Activated B cell treated with CpG ODN at 0.5 μM for 24 hours (primary cell): ENCODE measurements at regions of chr4 and their contacts with region 1.

Region 1: GRCh38 chr4:150867148-150867547 is 147.9 kb downstream of the LRBA start:
- DNase-seq: no peak
- ATAC-seq: peak; percentile 66
- H3K4me3 Mint-ChIP-seq: no peak overlapping the region
- H3K27ac Mint-ChIP-seq: no peak overlapping the region
- H3K4me1 Mint-ChIP-seq: no peaks in the 10 kb centered on the region
- H3K27me3 Mint-ChIP-seq: no peaks in the 10 kb centered on the region
- CTCF ChIP-seq: peak; percentile 59

Region 2: DNA sequence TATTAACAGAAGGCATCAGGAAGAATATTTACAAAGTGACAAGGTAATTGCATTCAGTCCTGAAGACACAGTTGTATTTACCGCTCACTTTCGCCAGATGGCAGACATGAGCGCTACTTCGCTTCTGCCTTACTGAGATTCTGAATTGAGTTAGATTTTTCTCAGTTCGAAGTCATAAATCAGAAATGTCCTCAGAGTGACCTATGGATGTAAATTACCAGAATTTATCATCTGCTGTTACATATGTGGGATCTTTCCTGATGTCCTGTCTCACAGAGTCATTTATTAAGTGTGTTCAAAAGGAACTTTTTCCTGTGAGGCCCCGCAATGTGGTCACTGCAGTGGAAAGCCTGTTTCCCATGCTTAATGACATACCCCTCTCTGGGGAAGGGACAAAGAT is 886.2 kb before region 1 on chr4:
- CTCF ChIA-PET with region 1: interaction called, 6 read pairs
- POLR2A ChIA-PET with region 1: no interaction called
- intact Hi-C with region 1: loop called (anchors 1 kb)
- DNase-seq: no peak
- ATAC-seq: peak; percentile 60
- H3K4me3 Mint-ChIP-seq: no peak overlapping the region
- H3K27ac Mint-ChIP-seq: no peak overlapping the region
- H3K4me1 Mint-ChIP-seq: no peaks in the 10 kb centered on the region
- H3K27me3 Mint-ChIP-seq: no peaks in the 10 kb centered on the region
- CTCF ChIP-seq: peak; percentile 80

Region 3: DNA sequence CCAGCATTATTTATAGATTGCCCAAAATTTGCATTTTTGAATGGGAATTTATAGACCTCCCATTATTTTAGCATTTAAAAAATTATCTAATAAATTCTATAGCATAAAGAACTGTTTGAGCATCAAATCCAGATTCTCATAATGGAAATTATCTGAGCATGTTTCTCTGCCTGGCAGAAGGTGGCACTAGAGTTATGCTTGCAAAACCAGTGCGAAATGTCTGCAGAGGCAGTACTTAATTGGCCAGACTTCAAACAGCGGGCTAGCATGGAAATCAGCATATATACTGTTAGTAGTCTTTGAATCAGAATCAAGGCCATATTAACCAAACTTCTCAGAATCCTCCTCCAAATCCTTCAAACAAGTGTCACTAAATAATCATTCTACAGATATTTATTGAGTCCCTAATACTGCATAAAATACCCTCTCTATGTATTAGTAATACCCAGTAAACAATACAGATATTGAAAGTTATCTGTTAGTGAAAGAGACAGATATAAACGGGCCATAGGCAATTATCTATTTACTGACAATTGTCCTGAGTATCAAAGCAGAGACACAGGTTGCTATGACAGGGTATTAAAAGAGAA is 867.6 kb before region 1 on chr4:
- CTCF ChIA-PET with region 1: interaction called, 3 read pairs
- POLR2A ChIA-PET with region 1: no interaction called
- intact Hi-C with region 1: loop called (anchors 1 kb)
- DNase-seq: no peak
- ATAC-seq: peak; percentile 54
- H3K4me3 Mint-ChIP-seq: no peak overlapping the region
- H3K27ac Mint-ChIP-seq: no peak overlapping the region
- H3K4me1 Mint-ChIP-seq: no peaks in the 10 kb centered on the region
- H3K27me3 Mint-ChIP-seq: no peaks in the 10 kb centered on the region
- CTCF ChIP-seq: no peak

Region 4: GRCh38 chr4:150242820-150243458 is 624.2 kb before region 1 on chr4:
- CTCF ChIA-PET with region 1: interaction called, 3 read pairs
- POLR2A ChIA-PET with region 1: no interaction called
- intact Hi-C with region 1: loop called (anchors 2 kb)
- DNase-seq: no peak
- ATAC-seq: no peak
- H3K4me3 Mint-ChIP-seq: no peak overlapping the region
- H3K27ac Mint-ChIP-seq: no peak overlapping the region
- H3K4me1 Mint-ChIP-seq: no peaks in the 10 kb centered on the region
- H3K27me3 Mint-ChIP-seq: peaks cover 3% of the 10 kb centered on the region
- CTCF ChIP-seq: peak; percentile 48

Region 5: GRCh38 chr4:150297861-150298474 is 569.2 kb before region 1 on chr4:
- CTCF ChIA-PET with region 1: interaction called, 44 read pairs
- POLR2A ChIA-PET with region 1: no interaction called
- intact Hi-C with region 1: loop called (anchors 1 kb)
- DNase-seq: no peak
- ATAC-seq: no peak
- H3K4me3 Mint-ChIP-seq: no peak overlapping the region
- H3K27ac Mint-ChIP-seq: no peak overlapping the region
- H3K4me1 Mint-ChIP-seq: no peaks in the 10 kb centered on the region
- H3K27me3 Mint-ChIP-seq: no peaks in the 10 kb centered on the region
- CTCF ChIP-seq: no peak

Region 6: GRCh38 chr4:150415213-150415612 is 451.9 kb before region 1 on chr4:
- CTCF ChIA-PET with region 1: no interaction called
- POLR2A ChIA-PET with region 1: no interaction called
- intact Hi-C with region 1: no loop called
- DNase-seq: no peak
- ATAC-seq: no peak
- H3K4me3 Mint-ChIP-seq: no peak overlapping the region
- H3K27ac Mint-ChIP-seq: no peak overlapping the region
- H3K4me1 Mint-ChIP-seq: no peaks in the 10 kb centered on the region
- H3K27me3 Mint-ChIP-seq: no peaks in the 10 kb centered on the region
- CTCF ChIP-seq: no peak

Region 7: DNA sequence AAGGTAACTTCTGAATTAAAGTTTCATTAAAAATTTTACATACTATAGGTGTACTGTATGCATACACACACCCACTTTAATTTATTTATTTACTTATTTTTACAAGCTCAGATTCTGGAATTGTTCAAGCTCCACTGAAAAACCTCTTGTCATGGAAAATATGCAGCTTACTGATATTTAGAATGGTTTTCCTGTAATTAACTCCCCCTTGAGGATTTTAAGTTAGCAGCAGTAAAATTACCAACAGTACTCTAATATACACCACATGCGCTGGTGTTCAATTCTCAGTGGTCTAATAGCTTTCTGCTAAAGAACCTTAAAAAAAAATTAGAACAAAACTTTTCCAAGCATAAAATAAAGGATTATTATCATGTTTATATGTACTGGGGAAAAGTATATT is 273.2 kb before region 1 on chr4:
- CTCF ChIA-PET with region 1: no interaction called
- POLR2A ChIA-PET with region 1: no interaction called
- intact Hi-C with region 1: loop called (anchors 10 kb)
- DNase-seq: no peak
- ATAC-seq: no peak
- H3K4me3 Mint-ChIP-seq: no peak overlapping the region
- H3K27ac Mint-ChIP-seq: no peak overlapping the region
- H3K4me1 Mint-ChIP-seq: no peaks in the 10 kb centered on the region
- H3K27me3 Mint-ChIP-seq: no peaks in the 10 kb centered on the region
- CTCF ChIP-seq: no peak

Region 8: DNA sequence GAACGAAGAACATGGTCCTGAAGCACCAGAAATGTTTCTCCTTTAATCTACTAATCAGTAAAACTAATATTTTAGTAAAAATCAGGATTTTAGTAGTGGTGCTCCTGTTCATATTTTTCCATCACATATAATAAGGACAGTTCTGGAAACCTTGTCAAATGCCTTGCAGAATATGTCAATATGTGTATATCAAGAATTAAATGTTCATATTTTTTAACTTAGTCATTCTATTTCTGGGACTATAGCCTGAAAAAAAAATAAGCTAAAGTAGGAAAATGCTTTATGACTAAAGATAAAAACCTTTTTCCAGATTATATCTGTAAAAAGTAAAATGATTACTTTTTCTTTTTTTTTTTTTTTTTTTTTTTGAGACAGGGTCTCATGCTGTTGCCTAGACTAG is 220.1 kb before region 1 on chr4:
- CTCF ChIA-PET with region 1: no interaction called
- POLR2A ChIA-PET with region 1: no interaction called
- intact Hi-C with region 1: no loop called
- DNase-seq: no peak
- ATAC-seq: no peak
- H3K4me3 Mint-ChIP-seq: no peak overlapping the region
- H3K27ac Mint-ChIP-seq: no peak overlapping the region
- H3K4me1 Mint-ChIP-seq: no peaks in the 10 kb centered on the region
- H3K27me3 Mint-ChIP-seq: no peaks in the 10 kb centered on the region
- CTCF ChIP-seq: no peak

Region 9: GRCh38 chr4:150828159-150828558 is 39.0 kb before region 1 on chr4:
- CTCF ChIA-PET with region 1: interaction called, 5 read pairs
- POLR2A ChIA-PET with region 1: no interaction called
- intact Hi-C with region 1: loop called (anchors 2 kb)
- DNase-seq: no peak
- ATAC-seq: peak; percentile 85
- H3K4me3 Mint-ChIP-seq: peak overlapping the region; percentile 75
- H3K27ac Mint-ChIP-seq: peak overlapping the region; percentile 88
- H3K4me1 Mint-ChIP-seq: peaks cover 32% of the 10 kb centered on the region
- H3K27me3 Mint-ChIP-seq: no peaks in the 10 kb centered on the region
- CTCF ChIP-seq: no peak